CD4-positive, alpha-beta memory T cell (primary cell): ENCODE measurements at regions of chr13 and their contacts with region 1.

Region 1: DNA sequence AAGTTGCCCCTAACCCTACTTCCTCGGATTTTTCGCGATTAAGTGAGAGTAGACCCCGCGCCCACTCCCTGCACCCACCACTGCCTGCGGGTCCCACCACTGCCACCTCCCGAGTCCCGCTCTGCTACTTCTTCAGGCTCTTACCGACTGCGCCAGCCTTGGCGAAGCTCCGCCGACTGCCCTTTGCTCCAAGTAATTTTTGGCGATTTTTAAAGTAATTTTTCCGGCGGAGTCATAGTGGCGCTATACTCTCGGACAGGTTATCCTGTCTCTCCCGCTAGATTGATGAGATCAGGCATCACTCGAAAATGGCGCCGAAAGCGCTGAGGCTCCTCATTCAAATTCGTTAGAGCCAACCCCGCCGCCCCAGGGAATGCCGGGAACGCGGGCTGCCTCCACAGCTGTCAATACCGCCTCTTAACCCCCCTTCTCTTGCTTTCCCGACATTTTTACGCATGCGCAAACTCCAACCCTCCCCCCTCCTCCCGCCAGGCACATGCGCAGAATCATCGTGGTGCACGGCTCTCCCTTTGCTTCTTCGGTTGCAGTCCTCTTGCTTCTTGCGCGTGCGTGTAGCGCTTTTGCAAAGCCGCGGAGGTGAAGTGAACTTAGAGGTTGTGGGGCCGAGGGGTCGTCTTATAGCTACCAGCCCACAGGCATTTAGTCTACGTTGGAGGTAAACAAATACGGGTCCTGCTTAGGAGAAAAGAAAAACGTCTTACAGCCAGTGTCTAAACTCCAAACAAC is 66.6 kb downstream of the KCNRG start:
- DNase-seq: peak; percentile 98 to 99 (median 99)
- H3K4me3 ChIP-seq: peak overlapping the region; percentile 85 to 87
- H3K4me3 Mint-ChIP-seq: peak overlapping the region; percentile 96 to 100 (median 99)
- H3K27ac ChIP-seq: peak overlapping the region; percentile 89
- H3K27ac Mint-ChIP-seq: peak overlapping the region; percentile 93 to 100 (median 98)
- H3K4me1 ChIP-seq: peaks cover 54% of the 10 kb centered on the region
- H3K4me1 Mint-ChIP-seq: peaks cover 23 to 62% (median 37%) of the 10 kb centered on the region in 4 donors
- H3K27me3 ChIP-seq: no peaks in the 10 kb centered on the region
- H3K27me3 Mint-ChIP-seq: peaks cover 0 to 6% of the 10 kb centered on the region in 2 donors

Region 2: GRCh38 chr13:49792550-49793324 is 289.1 kb before region 1 on chr13 and contains the start of gene KPNA3:
- CTCF ChIA-PET with region 1: no interaction called
- POLR2A ChIA-PET with region 1: interaction called, 4 read pairs
- intact Hi-C with region 1: loop called (anchors 2 kb)
- DNase-seq: peak; percentile 94 to 96 (median 95)
- H3K4me3 ChIP-seq: peak within 1 kb of the TSS; percentile 74 to 80
- H3K4me3 Mint-ChIP-seq: peak within 1 kb of the TSS; percentile 96 to 99 (median 97)
- H3K27ac ChIP-seq: peak within 1 kb of the TSS; percentile 74
- H3K27ac Mint-ChIP-seq: peak within 1 kb of the TSS; percentile 92 to 98 (median 98)
- H3K4me1 ChIP-seq: peaks cover 37% of the 10 kb centered on the region
- H3K4me1 Mint-ChIP-seq: peaks cover 22 to 42% (median 36%) of the 10 kb centered on the region in 4 donors
- H3K27me3 ChIP-seq: no peaks in the 10 kb centered on the region
- H3K27me3 Mint-ChIP-seq: peaks cover 0 to 5% of the 10 kb centered on the region in 2 donors
- total RNA-seq, gene KPNA3: 21.1 to 22.4 TPM

Region 3: DNA sequence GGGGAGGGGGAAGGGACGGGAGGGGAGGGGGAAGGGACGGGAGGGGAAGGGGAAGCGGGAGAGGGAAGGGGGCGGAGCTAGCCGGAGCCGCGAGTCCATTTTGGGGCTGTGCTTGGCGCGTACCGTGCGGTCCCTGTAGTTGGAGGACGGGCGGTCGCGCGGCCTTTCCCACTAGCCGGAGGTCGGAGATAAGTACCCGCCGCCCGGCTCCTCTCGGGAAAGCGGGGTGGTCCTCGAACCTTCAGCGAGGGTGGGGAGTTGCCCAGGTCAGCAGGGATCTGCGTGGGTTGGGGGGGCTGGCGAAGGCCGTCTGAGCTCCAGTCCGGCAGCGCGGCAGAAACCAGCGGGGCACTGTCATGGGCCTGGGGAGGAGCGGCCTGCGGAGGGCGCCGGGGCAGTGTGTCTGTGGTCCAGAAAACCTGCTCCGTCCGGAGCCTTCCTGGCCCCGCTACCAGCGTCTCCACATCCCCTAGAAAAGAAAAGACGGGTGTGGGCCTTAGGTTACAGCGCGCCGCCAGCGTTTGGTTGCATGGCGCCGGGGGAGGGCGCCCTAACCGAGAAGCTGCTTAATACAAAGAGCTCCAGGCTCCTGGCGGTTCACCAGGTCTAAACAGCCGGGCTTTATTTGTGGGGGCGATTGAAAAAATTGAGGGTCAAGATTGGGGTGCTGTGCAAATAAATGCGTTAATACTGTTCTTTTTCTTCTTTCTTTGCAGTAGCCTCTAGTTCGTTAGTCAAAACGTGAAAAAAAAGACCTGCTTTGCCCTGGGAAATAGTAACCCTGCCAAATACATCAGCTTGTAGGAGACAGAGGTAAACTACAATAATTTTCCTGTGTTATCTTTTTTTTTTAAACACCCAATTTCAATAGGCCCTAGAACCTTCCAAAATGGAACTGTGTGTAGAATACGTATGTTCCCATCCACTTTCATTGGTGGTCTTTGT is 84.6 kb before region 1 on chr13 and contains the start of gene TRIM13:
- CTCF ChIA-PET with region 1: interaction called, 114 read pairs
- POLR2A ChIA-PET with region 1: interaction called, 141 read pairs
- intact Hi-C with region 1: loop called (anchors 1 kb)
- DNase-seq: peak; percentile 81 to 85 (median 84)
- H3K4me3 ChIP-seq: peak within 1 kb of the TSS; percentile 82 to 96
- H3K4me3 Mint-ChIP-seq: peak within 1 kb of the TSS; percentile 89 to 94 (median 90)
- H3K27ac ChIP-seq: peak within 1 kb of the TSS; percentile 83
- H3K27ac Mint-ChIP-seq: peak within 1 kb of the TSS; percentile 84 to 93 (median 91)
- H3K4me1 ChIP-seq: peaks cover 59% of the 10 kb centered on the region
- H3K4me1 Mint-ChIP-seq: peaks cover 30 to 63% (median 43%) of the 10 kb centered on the region in 4 donors
- H3K27me3 ChIP-seq: no peaks in the 10 kb centered on the region
- H3K27me3 Mint-ChIP-seq: no peaks in the 10 kb centered on the region
- total RNA-seq, gene TRIM13: 30.3 to 32.4 TPM

Region 4: GRCh38 chr13:50106559-50106958 is 24.7 kb after region 1 on chr13:
- CTCF ChIA-PET with region 1: interaction called, 25 read pairs
- POLR2A ChIA-PET with region 1: interaction called, 12 read pairs
- intact Hi-C with region 1: no loop called
- DNase-seq: no peak
- H3K4me3 ChIP-seq: no peak overlapping the region
- H3K4me3 Mint-ChIP-seq: peak overlapping the region in 7 of 8 donors; percentile 21 to 88 (median 65)
- H3K27ac ChIP-seq: peak overlapping the region; percentile 36
- H3K27ac Mint-ChIP-seq: peak overlapping the region; percentile 36 to 93 (median 86)
- H3K4me1 ChIP-seq: peaks cover 52% of the 10 kb centered on the region
- H3K4me1 Mint-ChIP-seq: peaks cover 35 to 66% (median 48%) of the 10 kb centered on the region in 4 donors
- H3K27me3 ChIP-seq: no peaks in the 10 kb centered on the region
- H3K27me3 Mint-ChIP-seq: no peaks in the 10 kb centered on the region

Region 5: DNA sequence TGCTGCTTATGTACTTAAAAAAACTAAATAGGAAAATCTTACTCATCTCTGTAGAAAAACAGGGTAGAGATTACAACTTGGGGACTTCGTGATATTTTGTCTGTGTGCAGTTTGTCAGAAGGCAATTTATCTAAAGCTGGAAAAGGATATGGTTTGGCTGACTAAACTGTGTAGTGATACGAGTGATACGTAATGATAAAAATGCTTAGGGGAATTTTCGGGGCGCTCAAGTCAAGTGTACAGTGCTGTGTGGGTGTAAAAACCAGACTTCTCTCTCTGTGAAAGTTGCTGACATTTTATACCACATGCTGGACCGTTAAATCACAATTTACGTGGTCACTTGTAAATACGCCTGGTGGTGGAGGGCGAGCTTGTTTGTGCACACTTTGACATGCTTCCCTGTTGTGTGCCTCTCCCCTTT is 155.1 kb after region 1 on chr13:
- CTCF ChIA-PET with region 1: interaction called, 9 read pairs
- POLR2A ChIA-PET with region 1: interaction called, 8 read pairs
- intact Hi-C with region 1: loop called (anchors 2 kb)
- DNase-seq: peak; percentile 52 to 74 (median 56)
- H3K4me3 ChIP-seq: peak overlapping the region in 1 of 2 donors; percentile 55
- H3K4me3 Mint-ChIP-seq: peak overlapping the region; percentile 76 to 93 (median 86)
- H3K27ac ChIP-seq: peak overlapping the region; percentile 77
- H3K27ac Mint-ChIP-seq: peak overlapping the region; percentile 83 to 97 (median 95)
- H3K4me1 ChIP-seq: peaks cover 39% of the 10 kb centered on the region
- H3K4me1 Mint-ChIP-seq: peaks cover 32 to 52% (median 37%) of the 10 kb centered on the region in 4 donors
- H3K27me3 ChIP-seq: no peaks in the 10 kb centered on the region
- H3K27me3 Mint-ChIP-seq: no peaks in the 10 kb centered on the region

Region 6: GRCh38 chr13:50387051-50387581 is 305.3 kb after region 1 on chr13:
- CTCF ChIA-PET with region 1: interaction called, 22 read pairs
- POLR2A ChIA-PET with region 1: interaction called, 4 read pairs
- intact Hi-C with region 1: loop called (anchors 1 kb)
- DNase-seq: peak in 4 of 5 donors; percentile 15 to 34 (median 26)
- H3K4me3 ChIP-seq: no peak overlapping the region
- H3K4me3 Mint-ChIP-seq: peak overlapping the region in 1 of 8 donors; percentile 18
- H3K27ac ChIP-seq: no peak overlapping the region
- H3K27ac Mint-ChIP-seq: peak overlapping the region in 1 of 7 donors; percentile 43
- H3K4me1 ChIP-seq: peaks cover 19% of the 10 kb centered on the region
- H3K4me1 Mint-ChIP-seq: peaks cover 6 to 27% (median 22%) of the 10 kb centered on the region in 4 donors
- H3K27me3 ChIP-seq: no peaks in the 10 kb centered on the region
- H3K27me3 Mint-ChIP-seq: peaks cover 0 to 2% of the 10 kb centered on the region in 2 donors

Region 7: GRCh38 chr13:50801087-50801931 is 719.5 kb after region 1 on chr13:
- CTCF ChIA-PET with region 1: interaction called, 11 read pairs
- POLR2A ChIA-PET with region 1: interaction called, 3 read pairs
- intact Hi-C with region 1: loop called (anchors 1 kb)
- DNase-seq: peak; percentile 61 to 68 (median 62)
- H3K4me3 ChIP-seq: no peak overlapping the region
- H3K4me3 Mint-ChIP-seq: peak overlapping the region in 1 of 8 donors; percentile 22
- H3K27ac ChIP-seq: no peak overlapping the region
- H3K27ac Mint-ChIP-seq: peak overlapping the region in 2 of 7 donors; percentile 39 to 53
- H3K4me1 ChIP-seq: peaks cover 6% of the 10 kb centered on the region
- H3K4me1 Mint-ChIP-seq: peaks cover 5 to 9% (median 6%) of the 10 kb centered on the region in 4 donors
- H3K27me3 ChIP-seq: no peaks in the 10 kb centered on the region
- H3K27me3 Mint-ChIP-seq: no peaks in the 10 kb centered on the region